Activated CD4-positive, alpha-beta T cell treated with anti-CD3 and anti-CD28 coated beads for 36 hours (primary cell): ENCODE measurements at regions of chr2 and their contacts with region 1.

Region 1: GRCh38 chr2:64036034-64036705 is 16.9 kb upstream of the VPS54 start:
- DNase-seq: peak; percentile 24
- ATAC-seq: peak; percentile 88
- H3K4me3 Mint-ChIP-seq: peak overlapping the region; percentile 40
- H3K27ac Mint-ChIP-seq: peak overlapping the region; percentile 64
- H3K4me1 Mint-ChIP-seq: peaks cover 55% of the 10 kb centered on the region
- H3K27me3 Mint-ChIP-seq: peaks cover 2% of the 10 kb centered on the region

Region 2: GRCh38 chr2:62306751-62307468 is 1729.3 kb before region 1 on chr2:
- CTCF ChIA-PET with region 1: no interaction called
- POLR2A ChIA-PET with region 1: no interaction called
- intact Hi-C with region 1: loop called in 1 of 2 experiments (anchors 10 kb)
- DNase-seq: peak; percentile 69
- ATAC-seq: peak; percentile 20
- H3K4me3 Mint-ChIP-seq: no peak overlapping the region
- H3K27ac Mint-ChIP-seq: peak overlapping the region; percentile 79
- H3K4me1 Mint-ChIP-seq: peaks cover 72% of the 10 kb centered on the region
- H3K27me3 Mint-ChIP-seq: no peaks in the 10 kb centered on the region

Region 3: DNA sequence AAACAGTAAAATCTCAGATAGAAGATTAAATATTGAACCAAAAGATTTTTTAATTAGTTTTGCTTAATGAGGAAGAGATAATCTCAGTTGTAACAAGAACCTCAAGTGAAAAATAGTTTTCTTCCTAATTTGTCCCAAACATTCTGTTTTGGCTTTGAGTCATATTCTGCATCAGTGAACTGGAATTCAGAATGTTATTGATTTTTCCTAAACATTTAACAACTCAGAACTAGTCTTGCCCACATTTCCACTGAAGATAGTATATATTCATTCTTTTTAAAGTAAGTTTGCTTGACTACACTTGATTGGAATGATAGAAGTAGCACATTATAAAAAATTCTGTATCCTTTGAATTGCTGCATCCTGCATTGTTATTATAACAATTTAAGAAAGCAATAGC is 280.2 kb before region 1 on chr2:
- CTCF ChIA-PET with region 1: no interaction called
- POLR2A ChIA-PET with region 1: no interaction called
- intact Hi-C with region 1: no loop called
- DNase-seq: no peak
- ATAC-seq: no peak
- H3K4me3 Mint-ChIP-seq: no peak overlapping the region
- H3K27ac Mint-ChIP-seq: no peak overlapping the region
- H3K4me1 Mint-ChIP-seq: no peaks in the 10 kb centered on the region
- H3K27me3 Mint-ChIP-seq: peaks cover 5% of the 10 kb centered on the region

Region 4: GRCh38 chr2:64018923-64019718 is 17.0 kb before region 1 on chr2 and contains the start of gene VPS54:
- CTCF ChIA-PET with region 1: interaction called, 4 read pairs
- POLR2A ChIA-PET with region 1: interaction called, 3 read pairs
- intact Hi-C with region 1: loop called (anchors 1 kb)
- DNase-seq: peak; percentile 74
- ATAC-seq: peak; percentile 80
- H3K4me3 Mint-ChIP-seq: peak within 1 kb of the TSS; percentile 99
- H3K27ac Mint-ChIP-seq: peak within 1 kb of the TSS; percentile 98
- H3K4me1 Mint-ChIP-seq: peaks cover 37% of the 10 kb centered on the region
- H3K27me3 Mint-ChIP-seq: no peaks in the 10 kb centered on the region
- total RNA-seq, gene VPS54: 9.0 to 11.7 TPM

Region 5: GRCh38 chr2:64114063-64114911 is 78.1 kb after region 1 on chr2:
- CTCF ChIA-PET with region 1: no interaction called
- POLR2A ChIA-PET with region 1: no interaction called
- intact Hi-C with region 1: loop called in 1 of 2 experiments (anchors 1 kb)
- DNase-seq: no peak
- ATAC-seq: peak; percentile 85
- H3K4me3 Mint-ChIP-seq: peak overlapping the region; percentile 24
- H3K27ac Mint-ChIP-seq: peak overlapping the region; percentile 64
- H3K4me1 Mint-ChIP-seq: peaks cover 74% of the 10 kb centered on the region
- H3K27me3 Mint-ChIP-seq: no peaks in the 10 kb centered on the region

Region 6: DNA sequence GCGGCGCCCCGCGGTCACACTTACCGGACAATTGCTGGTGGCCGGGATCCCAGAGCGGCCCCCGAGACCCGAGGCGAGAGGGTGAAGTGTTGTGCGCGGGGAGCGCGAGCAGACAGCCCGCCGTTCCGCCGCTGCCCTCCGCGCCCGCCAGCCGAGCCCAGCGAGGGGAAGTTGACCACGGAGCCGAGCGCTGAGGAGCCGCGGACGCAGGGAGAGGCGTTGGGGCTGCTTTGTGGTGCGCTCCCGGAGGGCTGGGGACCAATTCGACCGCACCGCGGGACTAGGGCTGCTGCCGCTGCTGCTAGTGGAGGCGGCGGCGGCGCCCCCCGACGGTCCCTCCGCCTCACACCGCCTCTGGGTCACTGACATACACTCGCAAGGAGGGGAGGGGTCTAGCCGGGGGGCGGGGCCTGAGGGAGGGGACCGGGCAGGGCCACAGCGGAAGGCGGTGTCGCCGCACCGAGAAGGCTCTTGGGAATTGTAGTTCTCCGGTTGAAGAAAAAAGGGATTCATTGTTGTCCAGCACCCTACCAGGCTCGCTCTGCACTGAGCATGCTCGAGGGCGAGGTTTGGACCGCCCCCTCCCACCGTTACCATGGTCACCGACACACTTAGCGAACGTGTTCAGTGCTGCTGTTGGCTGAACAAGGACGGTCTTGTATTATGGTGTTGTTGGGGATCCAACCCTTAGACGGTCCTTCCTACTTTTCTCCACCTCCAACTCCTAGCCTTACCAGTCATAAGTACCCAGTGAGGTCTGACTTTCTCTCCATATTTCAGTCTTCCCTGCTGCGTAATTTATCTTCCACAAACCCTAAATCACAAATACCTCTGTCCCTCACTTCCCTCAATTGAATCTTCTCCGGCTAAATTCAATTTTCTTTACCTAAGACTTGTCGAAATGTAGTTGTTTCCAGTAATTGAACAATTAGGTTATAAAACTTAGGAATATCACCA is 108.2 kb after region 1 on chr2 and contains the start of gene PELI1:
- CTCF ChIA-PET with region 1: no interaction called
- POLR2A ChIA-PET with region 1: no interaction called
- intact Hi-C with region 1: loop called in 1 of 2 experiments (anchors 1 kb)
- DNase-seq: peak; percentile 97
- ATAC-seq: peak; percentile 89
- H3K4me3 Mint-ChIP-seq: peak within 1 kb of the TSS; percentile 84
- H3K27ac Mint-ChIP-seq: peak within 1 kb of the TSS; percentile 97
- H3K4me1 Mint-ChIP-seq: peaks cover 30% of the 10 kb centered on the region
- H3K27me3 Mint-ChIP-seq: no peaks in the 10 kb centered on the region
- total RNA-seq, gene PELI1: 21.3 to 29.7 TPM

Region 7: DNA sequence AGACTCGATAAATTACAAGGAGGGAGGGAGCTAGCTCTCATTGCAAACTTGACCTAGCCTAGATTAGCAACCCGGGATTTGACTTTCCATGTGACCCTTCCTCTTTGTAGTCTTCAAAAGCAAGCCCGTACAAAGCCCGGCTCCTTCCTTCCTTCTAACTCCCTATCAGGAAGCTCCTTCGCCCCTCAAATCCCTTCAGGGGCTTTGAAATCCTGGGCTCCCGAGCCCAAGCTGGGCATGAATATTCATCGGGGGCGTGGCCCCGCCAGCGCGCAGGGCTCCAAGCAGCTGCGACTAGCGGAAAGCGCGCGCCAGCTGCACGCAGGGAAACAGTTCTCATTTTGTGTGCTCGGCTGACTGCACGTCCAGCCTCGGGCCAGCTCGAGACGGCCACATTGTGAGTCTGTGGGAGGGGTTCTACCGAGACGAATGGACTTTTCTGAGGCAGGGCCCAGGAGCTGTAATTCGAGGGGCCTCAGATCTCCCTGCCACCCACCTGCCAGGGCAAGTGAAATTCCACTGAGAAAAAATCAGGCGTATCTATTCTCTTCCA is 192.0 kb after region 1 on chr2:
- CTCF ChIA-PET with region 1: no interaction called
- POLR2A ChIA-PET with region 1: no interaction called
- intact Hi-C with region 1: no loop called
- DNase-seq: peak; percentile 80
- ATAC-seq: peak; percentile 83
- H3K4me3 Mint-ChIP-seq: peak overlapping the region; percentile 72
- H3K27ac Mint-ChIP-seq: peak overlapping the region; percentile 91
- H3K4me1 Mint-ChIP-seq: peaks cover 28% of the 10 kb centered on the region
- H3K27me3 Mint-ChIP-seq: peaks cover 2% of the 10 kb centered on the region

Region 8: GRCh38 chr2:64453770-64454385 is 417.7 kb after region 1 on chr2 and contains the start of gene LGALSL:
- CTCF ChIA-PET with region 1: no interaction called
- POLR2A ChIA-PET with region 1: no interaction called
- intact Hi-C with region 1: no loop called
- DNase-seq: peak; percentile 68
- ATAC-seq: peak; percentile 77
- H3K4me3 Mint-ChIP-seq: peak within 1 kb of the TSS; percentile 76
- H3K27ac Mint-ChIP-seq: peak within 1 kb of the TSS; percentile 62
- H3K4me1 Mint-ChIP-seq: peaks cover 5% of the 10 kb centered on the region
- H3K27me3 Mint-ChIP-seq: peaks cover 19% of the 10 kb centered on the region
- total RNA-seq, gene LGALSL: 1.9 to 2.2 TPM